ENCODE measurements at regions of chr2 and their contacts with region 1.

Region 1: GRCh38 chr2:48946449-48947048 is 191.0 kb upstream of the LHCGR start:
- ATAC-seq: peak; percentile 75 to 91 (median 84)
- H3K4me3 ChIP-seq: no peak overlapping the region
- H3K27ac ChIP-seq: no peak overlapping the region
- H3K4me1 ChIP-seq: peaks cover 0 to 3% of the 10 kb centered on the region in 2 donors

Region 2: GRCh38 chr2:48600204-48600813 is 346.2 kb before region 1 on chr2:
- in situ Hi-C with region 1: loop called in 2 of 9 experiments (anchors 10 to 25 kb)
- ATAC-seq: peak in 6 of 8 experiments; percentile 16 to 56 (median 31)
- H3K4me3 ChIP-seq: no peak overlapping the region
- H3K27ac ChIP-seq: no peak overlapping the region
- H3K4me1 ChIP-seq: peaks cover 7 to 13% of the 10 kb centered on the region in 2 donors

Region 3: GRCh38 chr2:50401772-50402653 is 1455.5 kb after region 1 on chr2:
- in situ Hi-C with region 1: loop called in 1 of 9 experiments (anchors 25 kb)
- ATAC-seq: peak; percentile 46 to 82 (median 58)
- H3K4me3 ChIP-seq: no peak overlapping the region
- H3K27ac ChIP-seq: no peak overlapping the region
- H3K4me1 ChIP-seq: peaks cover 7 to 18% of the 10 kb centered on the region in 2 donors

Region 4: GRCh38 chr2:50492477-50492851 is 1545.9 kb after region 1 on chr2:
- in situ Hi-C with region 1: loop called in 1 of 9 experiments (anchors 25 kb)
- ATAC-seq: peak; percentile 63 to 86 (median 79)
- H3K4me3 ChIP-seq: peak overlapping the region in 1 of 5 donors; percentile 15
- H3K27ac ChIP-seq: no peak overlapping the region
- H3K4me1 ChIP-seq: peaks cover 4 to 9% of the 10 kb centered on the region in 2 donors